Ascending aorta (tissue), 2 donors: ENCODE measurements at regions of chr6 and their contacts with region 1.

Region 1: GRCh38 chr6:37102279-37103168 is 67.4 kb upstream of the PIM1 start:
- DNase-seq: peak; percentile 70 to 96
- H3K4me3 ChIP-seq: peak overlapping the region; percentile 7 to 62
- H3K27ac ChIP-seq: peak overlapping the region; percentile 70 to 88
- H3K4me1 ChIP-seq: peaks cover 11% of the 10 kb centered on the region in 2 donors
- H3K27me3 ChIP-seq: no peaks in the 10 kb centered on the region
- CTCF ChIP-seq: no peak

Region 2: GRCh38 chr6:37051138-37052026 is 51.1 kb before region 1 on chr6:
- intact Hi-C with region 1: loop called (anchors 2 kb)
- DNase-seq: peak; percentile 63 to 92
- H3K4me3 ChIP-seq: no peak overlapping the region
- H3K27ac ChIP-seq: no peak overlapping the region
- H3K4me1 ChIP-seq: peaks cover 0 to 6% of the 10 kb centered on the region in 2 donors
- H3K27me3 ChIP-seq: no peaks in the 10 kb centered on the region
- CTCF ChIP-seq: peak; percentile 88 to 92 (median 92)

Region 3: DNA sequence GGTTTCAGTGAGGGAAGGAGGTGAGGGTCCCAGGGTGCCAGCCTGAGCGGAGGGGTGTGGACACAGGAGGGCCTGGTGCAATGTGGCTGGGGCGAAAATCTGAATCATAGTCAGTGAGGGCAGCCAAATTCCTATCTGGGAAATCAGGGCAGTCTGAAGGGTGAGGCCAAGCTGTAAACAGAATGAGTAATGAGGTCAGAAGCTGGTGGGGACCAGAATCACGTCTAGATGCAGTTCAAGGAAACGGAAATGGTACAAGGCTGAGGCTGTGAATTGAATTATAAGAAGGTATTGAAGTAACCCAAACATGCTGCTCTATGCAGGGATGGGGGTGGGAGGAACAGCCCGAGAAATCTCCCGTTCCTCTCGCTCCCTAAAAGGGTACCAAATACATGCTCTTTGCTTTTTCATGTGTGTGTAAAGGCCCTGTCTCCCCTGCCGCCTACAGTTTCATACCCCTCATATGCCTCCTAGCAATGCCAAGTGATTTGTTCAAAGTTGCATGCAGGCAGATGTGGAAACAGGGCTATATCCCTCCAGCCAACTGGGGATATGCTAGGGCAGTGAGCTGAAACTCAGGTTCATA is 32.2 kb after region 1 on chr6:
- intact Hi-C with region 1: loop called (anchors 2 kb)
- DNase-seq: peak; percentile 63 to 93
- H3K4me3 ChIP-seq: no peak overlapping the region
- H3K27ac ChIP-seq: peak overlapping the region; percentile 87 to 92
- H3K4me1 ChIP-seq: peaks cover 9 to 35% of the 10 kb centered on the region in 2 donors
- H3K27me3 ChIP-seq: no peaks in the 10 kb centered on the region
- CTCF ChIP-seq: no peak

Region 4: GRCh38 chr6:37141281-37142049 is 38.9 kb after region 1 on chr6:
- intact Hi-C with region 1: loop called (anchors 1 kb)
- DNase-seq: no peak
- H3K4me3 ChIP-seq: no peak overlapping the region
- H3K27ac ChIP-seq: no peak overlapping the region
- H3K4me1 ChIP-seq: peaks cover 9 to 34% of the 10 kb centered on the region in 2 donors
- H3K27me3 ChIP-seq: no peaks in the 10 kb centered on the region
- CTCF ChIP-seq: no peak